AG04450 (cell line): ENCODE measurements at regions of chr22 and their contacts with region 1.

Region 1: DNA sequence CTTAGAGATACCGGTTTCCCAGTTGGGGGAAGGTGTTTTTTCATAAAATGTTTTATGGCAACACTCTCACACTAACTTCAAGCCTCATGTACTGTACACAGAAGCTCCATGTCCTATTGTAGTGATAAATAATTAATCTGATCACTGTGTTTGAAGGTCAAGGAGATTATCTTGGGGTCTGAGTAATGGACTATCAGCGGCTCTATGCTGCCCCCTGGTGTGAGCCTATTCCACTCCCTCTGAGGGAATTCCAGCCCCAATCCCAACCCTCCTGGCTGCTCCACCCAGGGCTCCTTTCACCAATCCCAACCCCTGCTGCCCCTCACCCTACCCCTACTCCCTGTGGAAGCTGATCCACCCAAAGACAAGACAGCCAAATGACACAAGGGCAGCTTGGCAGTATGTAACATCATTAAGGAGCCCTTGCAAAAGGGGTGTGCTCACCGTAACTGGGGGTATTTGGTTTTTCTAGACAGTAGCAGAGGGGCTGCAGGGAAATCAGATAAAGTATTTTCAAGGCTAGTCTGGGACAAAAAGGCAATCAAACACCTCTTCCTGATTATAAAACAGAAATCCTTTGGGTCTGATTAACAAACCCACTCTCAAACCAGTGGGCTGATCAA is 22.3 kb downstream of the HPS4 start:
- DNase-seq: no peak
- H3K4me3 ChIP-seq: no peak overlapping the region
- H3K27ac ChIP-seq: no peak overlapping the region
- H3K27me3 ChIP-seq: no peaks in the 10 kb centered on the region
- CTCF ChIP-seq: peak; percentile 90

Region 2: GRCh38 chr22:26364066-26365015 is 97.0 kb before region 1 on chr22:
- CTCF ChIA-PET with region 1: interaction called, 258 read pairs
- POLR2A ChIA-PET with region 1: no interaction called
- DNase-seq: peak; percentile 59
- H3K4me3 ChIP-seq: no peak overlapping the region
- H3K27ac ChIP-seq: no peak overlapping the region
- H3K27me3 ChIP-seq: no peaks in the 10 kb centered on the region
- CTCF ChIP-seq: peak; percentile 81

Region 3: DNA sequence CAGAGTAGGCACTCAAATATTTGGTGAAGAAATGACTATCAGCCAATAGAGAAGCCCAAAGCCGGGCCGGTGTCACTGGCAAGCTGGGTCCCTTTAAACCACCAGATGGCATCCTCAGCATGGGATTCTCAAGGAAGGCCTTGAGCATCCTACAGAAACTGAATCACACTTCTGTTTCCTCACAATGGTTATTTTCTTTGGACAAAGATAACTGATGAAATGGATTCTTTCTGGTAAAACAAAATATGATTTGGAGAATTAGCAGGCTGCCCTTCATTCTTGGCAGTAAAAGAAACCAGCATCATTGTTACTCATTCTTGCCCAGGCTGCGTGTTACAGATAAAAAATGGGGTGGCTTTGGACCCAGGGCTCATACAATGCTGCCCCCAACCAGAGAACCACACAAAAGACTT is 62.6 kb before region 1 on chr22:
- CTCF ChIA-PET with region 1: interaction called, 85 read pairs
- POLR2A ChIA-PET with region 1: no interaction called
- DNase-seq: peak; percentile 8
- H3K4me3 ChIP-seq: no peak overlapping the region
- H3K27ac ChIP-seq: no peak overlapping the region
- H3K27me3 ChIP-seq: peaks cover 12% of the 10 kb centered on the region
- CTCF ChIP-seq: peak; percentile 75

Region 4: DNA sequence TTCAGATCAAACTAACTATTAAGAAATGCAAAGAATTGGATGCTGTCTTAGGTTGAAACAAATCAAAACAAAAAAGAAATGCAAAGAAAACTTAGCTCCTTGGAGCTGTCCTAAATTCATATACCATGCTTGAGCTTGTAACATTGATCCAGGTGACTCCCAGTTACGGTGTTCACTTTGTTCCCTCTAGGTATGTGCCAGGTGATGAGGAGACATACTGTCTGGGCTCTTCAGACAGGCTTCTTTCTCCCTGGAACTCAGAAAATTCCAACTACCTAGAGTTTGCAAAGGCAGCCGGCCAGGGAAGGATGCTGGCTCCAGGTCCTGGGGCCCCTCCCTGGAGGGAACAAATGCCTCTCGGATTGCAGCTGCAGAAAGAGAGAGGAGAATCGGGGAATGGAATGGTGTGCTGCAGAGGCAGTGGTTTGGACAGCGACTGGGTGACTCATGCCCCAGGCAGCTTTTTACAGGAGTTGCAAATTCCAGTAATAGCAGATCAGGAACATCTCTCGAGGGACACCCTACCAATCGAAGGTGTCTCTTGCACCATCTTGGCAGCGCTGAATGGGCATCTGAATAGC is 44.5 kb before region 1 on chr22:
- CTCF ChIA-PET with region 1: interaction called, 13 read pairs
- POLR2A ChIA-PET with region 1: no interaction called
- DNase-seq: peak; percentile 39
- H3K4me3 ChIP-seq: no peak overlapping the region
- H3K27ac ChIP-seq: no peak overlapping the region
- H3K27me3 ChIP-seq: peaks cover 15% of the 10 kb centered on the region
- CTCF ChIP-seq: no peak

Region 5: GRCh38 chr22:26471522-26471921 is 10.2 kb after region 1 on chr22:
- CTCF ChIA-PET with region 1: interaction called, 24 read pairs
- POLR2A ChIA-PET with region 1: no interaction called
- DNase-seq: peak; percentile 27
- H3K4me3 ChIP-seq: no peak overlapping the region
- H3K27ac ChIP-seq: peak overlapping the region; percentile 42
- H3K27me3 ChIP-seq: no peaks in the 10 kb centered on the region
- CTCF ChIP-seq: no peak